HEK293 (cell line): ENCODE measurements at regions of chr5 and their contacts with region 1.

Region 1: DNA sequence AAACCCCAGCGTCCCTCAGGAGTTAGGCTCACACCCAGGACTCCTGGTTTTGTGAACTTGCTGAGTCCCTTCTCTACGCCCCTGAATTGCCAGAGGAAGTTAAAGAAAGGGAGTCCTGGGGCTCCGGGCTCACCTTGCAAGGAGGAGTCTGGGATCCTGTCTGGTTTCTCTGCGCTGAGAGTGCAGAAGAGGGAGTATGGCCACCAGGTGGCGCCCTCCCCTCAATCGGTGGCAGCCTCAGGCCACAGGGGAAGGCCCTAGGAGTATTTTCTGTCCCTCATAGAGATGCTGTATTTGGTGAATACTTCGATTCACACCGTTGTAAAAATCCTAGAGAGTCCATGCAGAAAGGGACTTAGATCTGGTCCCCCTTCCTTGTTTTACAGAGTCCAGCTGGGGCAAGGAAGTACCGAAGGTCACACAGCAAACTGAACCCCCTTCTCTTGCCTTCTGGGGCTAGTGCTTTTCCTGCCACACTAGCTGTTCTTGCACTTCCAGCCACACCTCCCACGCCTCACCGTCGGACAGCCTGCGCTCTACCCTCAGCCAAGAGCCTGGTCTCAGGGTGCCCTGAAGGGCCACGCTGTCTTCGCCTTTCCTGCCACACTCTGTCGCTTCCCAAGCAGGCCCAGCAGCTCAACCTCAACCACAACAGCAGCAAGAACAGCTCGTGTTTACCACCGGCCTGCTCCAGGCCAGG is 10.2 kb downstream of the HAND1 start:
- H3K4me3 ChIP-seq: no peak overlapping the region
- H3K27ac ChIP-seq: no peak overlapping the region
- H3K4me1 ChIP-seq: peaks cover 12% of the 10 kb centered on the region
- CTCF ChIP-seq: peak; percentile 82

Region 2: DNA sequence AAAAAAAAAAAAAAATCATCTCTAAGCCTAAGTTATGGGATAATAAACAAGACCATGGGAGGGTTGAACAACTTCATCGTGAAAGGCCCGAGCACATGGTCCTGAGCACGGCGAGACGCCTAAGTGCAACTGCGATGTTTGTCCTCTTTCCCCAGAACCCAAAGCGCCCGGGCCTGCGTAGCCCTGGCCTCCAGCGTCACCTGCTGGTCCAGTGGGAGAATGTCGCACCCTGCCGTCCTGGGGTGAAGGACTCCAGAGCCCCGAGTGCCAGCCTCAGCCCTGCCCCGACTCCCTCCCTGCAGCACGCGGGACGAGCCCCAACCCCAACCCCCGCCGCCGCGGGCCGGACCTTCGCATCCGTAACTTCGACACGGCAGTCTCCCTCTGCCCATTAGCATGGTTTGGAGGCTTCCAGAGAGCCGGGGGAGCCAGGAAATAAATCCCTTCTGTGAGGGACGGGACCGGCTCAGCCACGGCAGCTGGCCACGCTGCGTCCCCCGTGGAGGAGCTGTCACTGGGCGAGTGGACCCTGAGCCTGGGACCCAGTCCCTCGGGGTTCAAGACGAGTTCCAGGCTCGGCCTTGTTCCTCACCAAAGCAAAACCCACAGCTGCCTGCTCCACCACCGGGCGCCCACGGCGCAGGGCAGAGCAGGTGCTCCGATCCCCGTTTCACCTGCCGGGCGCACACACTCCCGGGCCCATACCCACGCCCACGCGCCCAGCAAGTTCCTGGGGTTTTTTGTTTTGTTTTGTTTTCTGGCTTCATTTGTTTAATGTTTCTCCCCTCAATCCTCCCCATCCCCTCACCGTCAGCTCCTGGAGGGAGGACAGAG is 142.7 kb after region 1 on chr5:
- CTCF ChIA-PET with region 1: interaction called, 147 read pairs
- POLR2A ChIA-PET with region 1: no interaction called
- H3K4me3 ChIP-seq: peak overlapping the region; percentile 37
- H3K27ac ChIP-seq: no peak overlapping the region; the same call in 1 of the 2 replicates
- H3K4me1 ChIP-seq: no peaks in the 10 kb centered on the region
- CTCF ChIP-seq: peak; percentile 98